ENCODE measurements at regions of chr4 and their contacts with region 1.

Region 1: DNA sequence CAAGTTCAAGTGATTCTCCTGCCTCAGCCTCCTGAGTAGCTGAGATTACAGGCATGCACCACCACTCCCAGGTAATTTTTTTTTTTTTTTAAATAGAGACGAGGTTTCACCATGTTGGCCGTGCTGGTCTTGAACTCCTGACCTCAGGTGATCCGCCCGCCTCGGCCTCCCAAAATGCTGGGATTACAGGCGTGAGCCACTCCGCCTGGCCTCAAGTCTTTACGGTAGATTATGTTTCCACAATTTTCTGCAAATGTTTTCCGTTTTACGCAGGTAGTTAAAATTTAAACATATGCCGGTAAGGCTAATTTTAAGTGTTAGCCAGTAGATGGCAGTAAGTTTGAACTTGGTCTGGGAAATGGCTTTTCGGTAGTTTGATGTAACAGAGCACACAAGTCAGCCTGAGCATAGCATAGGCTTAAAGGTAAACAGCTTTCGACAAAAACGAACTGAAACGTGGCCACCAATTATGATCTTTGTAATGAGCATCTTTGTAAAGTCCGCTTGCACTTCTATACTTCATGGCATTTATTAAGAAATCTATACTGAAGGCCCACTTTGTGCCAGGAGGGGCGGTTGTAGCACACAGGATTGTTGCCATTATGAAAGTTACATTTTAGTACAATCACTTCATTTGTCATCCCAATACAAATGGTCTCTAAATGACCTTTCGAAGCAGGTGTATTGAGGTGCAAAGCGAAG is 31.1 kb downstream of the CCKAR start:
- DNase-seq: no peak

Region 2: DNA sequence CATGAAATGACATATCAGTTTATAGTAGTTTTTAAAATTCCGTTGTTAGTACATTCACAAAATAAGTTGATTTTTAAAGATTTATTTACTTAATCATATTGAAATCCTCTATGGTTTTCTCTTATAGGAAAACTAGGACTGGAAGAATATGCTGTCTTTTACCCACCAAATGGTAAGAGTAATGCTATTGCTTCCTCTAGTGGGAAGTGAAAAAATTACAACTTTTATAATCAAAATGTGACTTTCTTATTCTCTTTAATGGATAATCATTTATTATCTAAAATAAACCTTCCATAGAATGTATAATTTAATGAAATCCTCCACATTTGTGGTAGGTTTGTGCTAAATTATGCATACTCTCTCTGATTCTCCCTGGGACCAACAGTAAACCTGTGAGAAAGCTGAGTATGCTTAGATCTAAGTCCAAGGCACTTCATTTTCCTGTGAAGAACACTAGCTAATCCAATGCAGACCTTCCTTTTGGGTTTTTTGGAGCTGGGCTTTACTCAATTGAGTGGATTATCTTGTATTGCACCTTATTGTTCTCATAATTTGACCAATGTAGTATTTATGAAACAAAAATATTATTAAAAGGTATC is 260.8 kb after region 1 on chr4:
- intact Hi-C with region 1: loop called in 1 of 2 experiments (anchors 10 kb)
- DNase-seq: no peak

Region 3: DNA sequence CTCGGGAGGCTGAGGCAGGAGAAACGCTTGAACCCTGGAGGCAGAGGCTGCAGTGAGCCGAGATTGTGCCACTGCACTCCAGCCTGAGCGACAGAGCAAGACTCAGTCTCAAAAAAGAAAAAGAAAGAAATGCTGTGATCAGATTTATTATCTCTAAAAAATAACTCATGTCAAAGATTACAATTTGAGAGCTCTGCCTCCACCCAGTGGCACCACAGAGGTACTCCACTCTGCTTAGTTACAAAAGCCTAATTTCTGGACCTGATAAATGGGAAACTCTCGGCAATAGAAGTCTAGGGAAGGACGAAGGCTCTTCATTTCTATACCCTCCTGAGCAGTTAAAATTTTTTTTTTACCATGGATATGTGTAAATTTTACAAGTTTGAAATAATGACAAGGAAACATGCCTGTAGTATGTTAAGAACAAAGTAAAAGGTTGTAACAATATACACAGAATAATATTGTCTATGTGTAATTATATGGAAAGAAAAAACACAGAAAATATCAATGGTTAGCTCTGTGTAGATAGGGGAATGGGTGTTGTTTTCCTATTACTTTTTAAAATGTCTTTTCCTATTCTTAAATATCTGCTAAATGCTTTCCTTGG is 551.2 kb after region 1 on chr4:
- intact Hi-C with region 1: loop called in 1 of 2 experiments (anchors 10 kb)
- DNase-seq: peak; percentile 86